WTC11 (cell line): ENCODE measurements at regions of chr9 and their contacts with region 1.

Region 1: DNA sequence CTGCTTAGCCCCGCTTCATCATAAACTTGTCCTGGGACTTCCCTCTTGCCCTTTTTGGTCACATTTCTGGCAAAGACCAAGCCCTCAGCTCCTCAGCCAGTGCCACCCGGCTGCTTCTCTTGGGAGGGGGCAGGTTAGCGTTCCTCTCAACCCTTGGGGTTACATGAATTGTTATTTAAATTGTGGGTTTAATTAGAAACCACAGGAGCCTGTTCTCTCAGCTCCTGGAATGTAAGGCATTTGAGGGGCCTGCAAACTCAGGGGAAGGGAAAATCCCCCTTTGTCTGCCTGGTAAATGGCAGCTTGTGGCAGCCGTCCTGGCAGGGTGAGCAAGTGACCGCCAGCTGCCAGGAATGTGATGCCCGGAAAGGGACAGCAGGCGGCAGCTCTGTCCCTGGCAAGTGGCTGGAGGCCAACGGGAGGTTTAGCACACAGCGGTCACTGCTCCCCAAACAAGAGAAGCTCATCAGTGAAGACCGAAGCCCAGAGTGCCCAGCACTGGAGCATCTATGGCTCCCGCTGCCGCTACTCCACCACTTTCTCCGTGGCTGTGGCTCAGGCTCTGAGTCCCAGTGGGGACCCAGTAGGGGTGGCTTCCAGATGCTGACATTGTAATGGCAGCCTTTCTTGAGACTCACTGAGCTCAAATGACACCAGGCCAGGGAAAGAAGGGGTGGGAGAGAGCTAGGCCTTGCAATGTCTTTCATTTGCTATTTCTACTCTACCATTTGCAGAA is 51.7 kb downstream of the SHB start:
- DNase-seq: peak; percentile 85
- ATAC-seq: peak; percentile 88
- H3K4me3 Mint-ChIP-seq: peak overlapping the region; percentile 49
- H3K27ac Mint-ChIP-seq: peak overlapping the region; percentile 97
- H3K4me1 Mint-ChIP-seq: peaks cover 93% of the 10 kb centered on the region
- H3K27me3 Mint-ChIP-seq: no peaks in the 10 kb centered on the region; the same call in 1 of the 2 replicates
- CTCF ChIP-seq: no peak; the same call in 1 of the 2 replicates

Region 2: DNA sequence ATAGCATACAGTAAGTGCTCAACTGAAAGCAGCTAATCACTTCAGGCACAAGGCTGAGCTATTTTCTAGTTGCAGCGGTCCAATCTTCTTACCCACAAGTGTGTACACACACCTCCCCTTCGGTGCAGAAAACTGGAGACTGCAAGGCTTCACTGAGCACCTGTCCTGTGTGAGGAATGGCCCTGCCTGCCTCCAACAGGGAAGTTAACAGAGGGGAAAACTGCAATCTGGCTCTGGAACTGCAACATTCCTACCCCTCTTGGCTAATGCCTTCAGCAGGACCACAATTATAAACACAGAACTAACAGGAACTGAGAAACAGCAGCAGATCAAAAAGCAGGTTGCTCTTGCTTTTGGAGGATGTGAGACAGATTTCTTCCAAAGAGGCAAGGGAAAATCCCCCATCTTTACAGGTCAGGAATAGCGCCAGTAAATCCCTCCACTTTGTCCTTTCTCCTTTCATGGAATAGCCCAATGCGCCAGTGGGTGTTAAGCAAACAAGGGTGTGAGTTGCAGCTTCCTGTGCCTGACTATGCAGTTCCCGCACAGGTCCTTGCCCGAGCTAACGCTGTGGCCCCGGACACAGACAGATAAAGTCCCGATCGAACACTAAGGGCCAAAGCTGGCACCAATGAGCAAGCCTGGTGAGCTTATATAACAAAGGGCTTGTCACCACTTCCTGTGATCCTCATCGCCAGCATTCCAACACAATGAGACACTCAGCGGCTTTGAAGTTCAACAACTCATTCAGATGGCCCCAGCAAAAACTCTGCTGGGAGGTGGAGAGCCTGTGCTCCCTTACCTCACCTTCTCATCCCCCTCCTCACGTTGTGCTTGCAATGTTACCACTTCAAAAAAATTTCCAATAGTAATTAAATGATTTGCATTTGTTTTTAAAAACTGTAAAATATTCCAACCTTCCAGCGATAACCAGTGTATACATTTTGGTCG is 30.3 kb after region 1 on chr9:
- CTCF ChIA-PET with region 1: interaction called, 18 read pairs
- POLR2A ChIA-PET with region 1: interaction called, 4 read pairs
- DNase-seq: peak; percentile 39
- ATAC-seq: peak; percentile 81
- H3K4me3 Mint-ChIP-seq: peak overlapping the region; percentile 11
- H3K27ac Mint-ChIP-seq: peak overlapping the region; percentile 98
- H3K4me1 Mint-ChIP-seq: peaks cover 65% of the 10 kb centered on the region
- H3K27me3 Mint-ChIP-seq: no peaks in the 10 kb centered on the region
- CTCF ChIP-seq: no peak

Region 3: DNA sequence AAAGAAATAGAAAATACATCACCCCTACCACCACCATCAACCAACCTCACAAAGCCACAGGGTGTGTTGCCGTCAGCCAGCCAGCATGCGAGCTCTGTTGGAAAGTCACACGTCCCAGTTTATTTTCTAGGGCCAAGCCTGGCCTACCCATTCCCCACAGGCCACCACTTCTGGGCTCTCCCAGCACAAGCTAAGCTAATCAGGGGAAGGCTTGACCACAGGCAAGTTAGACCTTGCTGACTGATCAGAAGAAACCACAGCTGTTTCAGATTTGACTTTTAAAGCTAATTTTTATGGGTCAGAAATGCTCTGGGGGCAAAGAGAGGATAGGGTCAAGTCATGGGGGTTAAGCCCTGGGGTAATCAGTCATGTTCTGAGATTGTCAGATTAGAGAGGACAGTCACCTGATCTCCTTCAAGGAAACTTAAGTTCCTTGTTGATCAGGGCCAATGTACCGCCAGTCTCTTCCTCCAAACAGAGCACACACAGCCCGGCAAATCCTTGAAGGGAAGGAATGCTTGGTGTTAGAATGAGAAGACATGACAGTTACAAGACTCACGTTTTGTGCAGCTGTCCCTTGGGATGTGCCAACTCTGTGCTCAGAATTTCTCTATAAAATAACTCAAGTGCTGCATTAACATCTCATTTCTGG is 44.1 kb after region 1 on chr9:
- CTCF ChIA-PET with region 1: interaction called, 10 read pairs
- POLR2A ChIA-PET with region 1: interaction called, 10 read pairs
- DNase-seq: no peak
- ATAC-seq: no peak
- H3K4me3 Mint-ChIP-seq: no peak overlapping the region
- H3K27ac Mint-ChIP-seq: no peak overlapping the region
- H3K4me1 Mint-ChIP-seq: peaks cover 73% of the 10 kb centered on the region
- H3K27me3 Mint-ChIP-seq: peaks cover 2% of the 10 kb centered on the region; the same call in 1 of the 2 replicates
- CTCF ChIP-seq: no peak

Region 4: GRCh38 chr9:38079461-38080031 is 62.2 kb after region 1 on chr9:
- CTCF ChIA-PET with region 1: interaction called, 11 read pairs
- POLR2A ChIA-PET with region 1: no interaction called
- DNase-seq: no peak
- ATAC-seq: no peak
- H3K4me3 Mint-ChIP-seq: no peak overlapping the region
- H3K27ac Mint-ChIP-seq: no peak overlapping the region
- H3K4me1 Mint-ChIP-seq: peaks cover 16% of the 10 kb centered on the region
- H3K27me3 Mint-ChIP-seq: no peaks in the 10 kb centered on the region; the same call in 1 of the 2 replicates
- CTCF ChIP-seq: no peak

Region 5: GRCh38 chr9:38160613-38161215 is 143.4 kb after region 1 on chr9:
- CTCF ChIA-PET with region 1: interaction called, 10 read pairs
- POLR2A ChIA-PET with region 1: no interaction called
- DNase-seq: peak; percentile 86
- ATAC-seq: peak; percentile 87
- H3K4me3 Mint-ChIP-seq: no peak overlapping the region
- H3K27ac Mint-ChIP-seq: no peak overlapping the region; the same call in 1 of the 2 replicates
- H3K4me1 Mint-ChIP-seq: no peaks in the 10 kb centered on the region
- H3K27me3 Mint-ChIP-seq: peaks cover 7% of the 10 kb centered on the region
- CTCF ChIP-seq: peak; percentile 91